Ascending aorta (tissue), 2 donors: ENCODE measurements at regions of chr3 and their contacts with region 1.

Region 1: GRCh38 chr3:24237971-24238767 is 256.5 kb downstream of the THRB start:
- DNase-seq: no peak
- H3K4me3 ChIP-seq: no peak overlapping the region
- H3K27ac ChIP-seq: peak overlapping the region; percentile 72 to 80
- H3K4me1 ChIP-seq: peaks cover 3 to 34% of the 10 kb centered on the region in 2 donors
- H3K27me3 ChIP-seq: no peaks in the 10 kb centered on the region
- CTCF ChIP-seq: peak; percentile 61 to 77 (median 71)

Region 2: DNA sequence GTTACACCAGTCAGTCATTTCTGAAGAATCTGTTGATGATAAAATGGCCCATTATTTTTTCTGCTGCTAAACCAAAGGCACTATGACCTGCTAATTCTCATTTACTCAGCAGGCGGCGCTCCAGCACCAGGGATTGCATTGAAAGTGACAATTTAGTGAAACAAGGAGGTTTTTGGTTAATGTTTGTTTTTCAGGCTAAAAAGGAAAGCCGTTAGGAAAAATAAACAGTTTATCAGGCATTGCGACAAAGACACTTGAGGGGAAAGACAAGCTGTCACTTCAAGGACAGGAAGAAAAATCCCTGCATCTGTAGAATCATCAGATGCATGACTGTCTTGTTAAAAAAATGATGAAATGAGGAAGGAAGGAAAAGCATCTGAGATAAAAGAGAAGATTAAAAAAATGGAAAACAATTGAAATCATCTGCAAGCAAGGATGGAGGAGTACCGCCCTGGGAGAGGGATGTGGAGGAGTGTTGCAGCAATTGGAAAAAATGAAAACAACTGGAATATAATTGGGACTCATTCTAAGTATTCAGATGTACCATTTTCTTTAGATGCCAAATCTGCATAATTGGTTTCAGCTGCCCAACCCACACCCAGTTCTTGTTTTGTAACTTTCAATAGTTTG is 239.0 kb before region 1 on chr3:
- intact Hi-C with region 1: loop called (anchors 1 kb)
- DNase-seq: peak in 1 of 2 donors; percentile 92
- H3K4me3 ChIP-seq: no peak overlapping the region
- H3K27ac ChIP-seq: peak overlapping the region in 1 of 2 donors; percentile 42
- H3K4me1 ChIP-seq: peaks cover 0 to 8% of the 10 kb centered on the region in 2 donors
- H3K27me3 ChIP-seq: no peaks in the 10 kb centered on the region
- CTCF ChIP-seq: peak; percentile 91 to 95 (median 94)

Region 3: DNA sequence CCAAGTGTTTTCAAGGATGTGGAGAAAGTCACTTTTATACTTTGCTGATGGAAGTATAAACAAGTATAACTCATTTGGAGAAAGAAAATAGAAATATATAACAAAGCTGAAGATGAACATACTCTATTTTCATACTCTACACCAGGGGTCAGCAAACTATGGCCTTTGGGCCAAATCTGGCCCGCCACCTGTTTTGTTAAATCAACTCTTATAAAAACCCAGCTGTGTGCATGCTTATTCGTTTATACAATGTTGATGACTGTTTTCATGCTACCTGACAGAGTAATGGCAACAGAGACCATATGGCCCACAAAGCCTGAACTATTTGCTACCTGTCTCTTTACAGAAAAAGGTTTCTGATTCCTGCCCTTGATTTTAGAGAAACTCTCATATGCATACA is 169.1 kb before region 1 on chr3:
- intact Hi-C with region 1: loop called (anchors 10 kb)
- DNase-seq: no peak
- H3K4me3 ChIP-seq: no peak overlapping the region
- H3K27ac ChIP-seq: no peak overlapping the region
- H3K4me1 ChIP-seq: peaks cover 0 to 3% of the 10 kb centered on the region in 2 donors
- H3K27me3 ChIP-seq: no peaks in the 10 kb centered on the region
- CTCF ChIP-seq: peak; percentile 19 to 39 (median 19)

Region 4: GRCh38 chr3:24185738-24186384 is 52.3 kb before region 1 on chr3:
- intact Hi-C with region 1: loop called (anchors 2 kb)
- DNase-seq: peak in 1 of 2 donors; percentile 69
- H3K4me3 ChIP-seq: no peak overlapping the region
- H3K27ac ChIP-seq: peak overlapping the region; percentile 66 to 87
- H3K4me1 ChIP-seq: peaks cover 0 to 36% of the 10 kb centered on the region in 2 donors
- H3K27me3 ChIP-seq: no peaks in the 10 kb centered on the region
- CTCF ChIP-seq: peak; percentile 54 to 65 (median 58)

Region 5: DNA sequence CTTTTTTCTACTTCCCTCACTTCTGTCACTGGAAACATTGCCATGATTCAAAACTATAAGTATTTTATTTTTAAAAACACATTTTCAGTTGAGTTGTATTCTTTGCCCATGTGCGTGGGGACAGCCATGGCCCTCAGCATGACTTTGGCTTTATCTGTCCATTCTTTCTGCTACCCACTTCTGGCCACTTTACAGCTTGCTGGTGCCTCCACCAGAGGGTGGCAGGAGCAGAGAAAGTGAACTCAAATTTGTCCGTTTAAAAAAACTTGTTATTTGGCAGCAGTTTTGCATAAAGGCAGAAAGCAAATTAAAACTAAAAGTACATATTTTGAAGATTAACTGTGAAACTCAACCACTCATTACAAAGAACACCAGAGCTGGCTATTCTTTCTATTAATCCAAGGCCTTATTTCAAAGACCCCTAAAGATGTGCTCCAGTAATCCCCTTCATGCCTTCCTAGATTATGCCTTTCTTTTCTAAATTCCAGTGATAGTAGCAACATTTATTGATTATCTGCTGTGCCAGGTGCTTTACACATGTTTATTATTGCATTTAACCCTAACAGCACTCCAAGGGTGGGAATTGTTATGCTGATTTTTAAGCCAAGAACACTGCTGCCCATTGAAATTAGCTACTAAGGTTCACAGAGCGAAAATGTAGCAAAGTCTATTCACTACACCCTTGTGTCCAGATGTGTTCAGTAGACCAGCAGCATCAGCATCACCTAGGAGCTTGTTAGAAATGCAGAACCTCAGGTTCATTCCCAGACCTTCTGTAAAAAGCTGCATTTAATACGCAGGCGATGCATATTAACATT is 121.7 kb after region 1 on chr3:
- intact Hi-C with region 1: loop called (anchors 5 kb)
- DNase-seq: no peak
- H3K4me3 ChIP-seq: no peak overlapping the region
- H3K27ac ChIP-seq: peak overlapping the region; percentile 73 to 78
- H3K4me1 ChIP-seq: peaks cover 10 to 67% of the 10 kb centered on the region in 2 donors
- H3K27me3 ChIP-seq: no peaks in the 10 kb centered on the region
- CTCF ChIP-seq: peak in 2 of 3 experiments; percentile 16 to 44